Left cardiac atrium (tissue), 4 donors: ENCODE measurements at regions of chr10 and their contacts with region 1.

Region 1: DNA sequence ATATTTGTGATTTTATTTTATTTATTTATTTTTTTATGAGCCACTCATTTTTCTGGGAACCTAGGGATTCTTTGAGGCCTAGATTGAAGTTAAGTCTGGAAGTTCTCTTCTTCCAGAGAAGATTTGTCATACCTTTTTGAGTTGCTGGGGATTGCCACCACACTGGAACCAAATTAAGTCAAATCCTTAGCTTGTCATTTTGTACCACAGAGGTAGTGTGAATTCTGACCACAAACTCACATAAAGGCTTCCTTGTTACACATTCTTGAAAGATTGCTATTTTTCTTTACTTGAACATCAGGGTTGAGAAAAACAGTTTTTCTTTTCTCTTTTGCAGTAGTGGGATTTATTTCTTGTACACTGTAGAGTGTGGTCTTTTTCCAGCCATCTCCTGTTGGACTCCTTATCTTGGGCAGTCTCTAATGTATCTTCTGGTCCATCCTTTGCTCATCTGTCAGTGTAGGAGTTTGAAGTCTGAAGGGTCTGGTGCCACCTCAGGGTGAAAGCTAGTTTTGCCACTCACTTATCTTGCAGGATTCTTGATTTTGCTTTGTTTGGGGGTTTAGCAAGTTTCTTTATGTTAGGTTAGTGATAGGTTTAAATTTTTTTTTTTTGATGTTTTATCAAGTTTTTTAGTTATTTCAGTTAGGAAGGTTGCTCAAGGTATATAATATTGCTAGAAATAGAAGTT is 24.8 kb downstream of the PCBD1 start:
- DNase-seq: no peak
- ATAC-seq: no peak

Region 2: GRCh38 chr10:70742537-70743429 is 120.8 kb before region 1 on chr10:
- intact Hi-C with region 1: no loop called
- DNase-seq: peak; percentile 53
- ATAC-seq: peak; percentile 75 to 76

Region 3: GRCh38 chr10:70827086-70827757 is 36.4 kb before region 1 on chr10:
- intact Hi-C with region 1: loop called in 1 of 2 experiments (anchors 5 kb)
- DNase-seq: no peak
- ATAC-seq: no peak